PC-3 (cell line): ENCODE measurements at regions of chr19 and their contacts with region 1.

Region 1: DNA sequence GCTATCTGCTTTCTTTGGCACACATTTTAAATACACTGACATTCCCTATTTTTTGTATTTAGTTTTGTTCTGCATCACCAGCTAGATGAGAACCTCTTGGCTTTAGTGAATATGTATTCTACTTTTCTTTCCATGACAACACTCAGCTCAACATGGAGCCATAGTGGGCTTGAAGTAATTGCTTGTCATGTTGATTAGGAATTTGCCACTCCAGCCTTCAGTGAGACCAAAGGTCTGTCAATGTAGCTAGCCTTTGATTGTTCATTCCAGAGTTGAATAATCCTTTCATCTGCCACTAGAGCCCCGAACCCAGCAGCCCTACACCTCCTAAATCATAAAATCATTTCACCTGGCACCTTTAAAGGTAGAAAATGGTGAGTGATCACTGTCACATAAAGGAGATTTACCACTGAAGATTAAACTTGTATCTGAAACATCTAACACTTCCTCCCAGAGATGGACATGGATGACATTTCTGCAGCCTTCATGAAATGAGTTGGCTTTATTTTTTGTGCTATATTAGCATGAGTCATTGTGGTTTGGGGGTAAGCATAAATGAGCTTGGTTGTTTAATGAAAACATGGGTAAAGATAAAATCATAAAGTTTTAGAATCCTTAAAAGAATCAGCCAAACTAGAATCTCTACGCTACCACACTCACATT is 29.2 kb upstream of the GARRE1 start:
- DNase-seq: peak; percentile 58
- ATAC-seq: peak; percentile 83
- H3K4me3 ChIP-seq: no peak overlapping the region
- H3K27ac ChIP-seq: peak overlapping the region; percentile 47
- H3K4me1 ChIP-seq: peaks cover 31% of the 10 kb centered on the region
- H3K27me3 ChIP-seq: no peaks in the 10 kb centered on the region
- CTCF ChIP-seq: no peak

Region 2: GRCh38 chr19:34188408-34188807 is 36.7 kb before region 1 on chr19:
- CTCF ChIA-PET with region 1: no interaction called
- POLR2A ChIA-PET with region 1: no interaction called
- intact Hi-C with region 1: no loop called
- DNase-seq: no peak
- ATAC-seq: no peak
- H3K4me3 ChIP-seq: no peak overlapping the region
- H3K27ac ChIP-seq: no peak overlapping the region
- H3K4me1 ChIP-seq: no peaks in the 10 kb centered on the region
- H3K27me3 ChIP-seq: no peaks in the 10 kb centered on the region
- CTCF ChIP-seq: no peak

Region 3: GRCh38 chr19:34336781-34337271 is 111.7 kb after region 1 on chr19:
- CTCF ChIA-PET with region 1: no interaction called
- POLR2A ChIA-PET with region 1: no interaction called
- intact Hi-C with region 1: loop called (anchors 5 kb)
- DNase-seq: peak; percentile 32
- ATAC-seq: no peak
- H3K4me3 ChIP-seq: no peak overlapping the region
- H3K27ac ChIP-seq: no peak overlapping the region
- H3K4me1 ChIP-seq: no peaks in the 10 kb centered on the region
- H3K27me3 ChIP-seq: no peaks in the 10 kb centered on the region
- CTCF ChIP-seq: peak; percentile 64